HEK293 (cell line): ENCODE measurements at regions of chr3 and their contacts with region 1.

Region 1: DNA sequence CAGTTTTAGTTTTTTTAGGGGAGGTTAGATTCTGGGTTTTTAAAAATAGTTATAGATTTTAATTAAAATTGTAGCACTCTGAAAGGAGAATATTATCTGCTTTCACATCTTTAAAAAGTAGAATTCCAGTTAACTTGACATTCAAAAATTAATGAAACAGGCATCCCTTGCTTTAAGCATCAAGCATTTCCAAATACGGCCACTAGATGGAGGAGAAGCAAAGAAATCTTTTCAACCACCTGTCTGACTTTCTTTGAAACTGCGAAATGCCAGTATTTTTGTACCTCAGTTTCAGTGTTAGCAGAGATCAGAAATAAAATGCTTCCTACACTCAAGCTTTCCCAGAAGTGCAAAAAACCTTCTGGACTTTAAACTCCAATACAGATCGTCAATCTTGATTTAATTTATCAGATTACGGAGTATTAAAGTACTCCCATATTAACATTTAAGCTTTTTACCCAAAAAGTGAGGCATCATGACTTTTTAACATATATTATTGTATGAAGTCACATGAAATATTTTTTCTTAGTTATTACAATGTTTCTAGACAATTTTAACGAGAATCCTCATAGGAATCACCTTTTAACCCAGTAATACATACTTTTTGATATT is 153.3 kb downstream of the P3H2 start:
- H3K4me3 ChIP-seq: no peak overlapping the region
- H3K27ac ChIP-seq: no peak overlapping the region
- H3K4me1 ChIP-seq: no peaks in the 10 kb centered on the region
- CTCF ChIP-seq: no peak

Region 2: GRCh38 chr3:190012314-190012782 is 45.0 kb after region 1 on chr3:
- CTCF ChIA-PET with region 1: interaction called, 10 read pairs
- POLR2A ChIA-PET with region 1: no interaction called
- H3K4me3 ChIP-seq: peak overlapping the region; percentile 14
- H3K27ac ChIP-seq: no peak overlapping the region
- H3K4me1 ChIP-seq: peaks cover 4% of the 10 kb centered on the region; the same call in 1 of the 2 replicates
- CTCF ChIP-seq: no peak

Region 3: DNA sequence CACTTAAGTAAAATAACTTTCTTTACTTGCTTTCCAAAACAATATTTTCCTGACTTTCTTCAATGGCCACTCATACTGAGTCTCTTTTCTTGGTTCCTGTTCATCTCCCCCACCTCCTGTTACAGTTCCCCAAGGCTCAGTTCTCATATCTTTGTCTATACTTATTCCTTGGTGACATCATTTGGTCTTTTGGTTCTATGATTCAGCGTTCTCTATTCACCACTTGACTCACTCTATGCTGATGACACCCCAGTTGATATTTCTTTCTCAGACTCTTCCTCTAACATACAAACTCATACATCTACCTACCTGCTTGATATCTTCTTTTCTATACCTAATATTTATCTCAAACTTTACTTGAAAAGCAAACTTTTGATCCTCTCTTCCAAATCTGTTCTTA is 238.4 kb after region 1 on chr3:
- CTCF ChIA-PET with region 1: interaction called, 15 read pairs
- POLR2A ChIA-PET with region 1: no interaction called
- H3K4me3 ChIP-seq: no peak overlapping the region
- H3K27ac ChIP-seq: no peak overlapping the region
- H3K4me1 ChIP-seq: no peaks in the 10 kb centered on the region
- CTCF ChIP-seq: no peak